ENCODE measurements at regions of chr9 and their contacts with region 1.

Region 1: DNA sequence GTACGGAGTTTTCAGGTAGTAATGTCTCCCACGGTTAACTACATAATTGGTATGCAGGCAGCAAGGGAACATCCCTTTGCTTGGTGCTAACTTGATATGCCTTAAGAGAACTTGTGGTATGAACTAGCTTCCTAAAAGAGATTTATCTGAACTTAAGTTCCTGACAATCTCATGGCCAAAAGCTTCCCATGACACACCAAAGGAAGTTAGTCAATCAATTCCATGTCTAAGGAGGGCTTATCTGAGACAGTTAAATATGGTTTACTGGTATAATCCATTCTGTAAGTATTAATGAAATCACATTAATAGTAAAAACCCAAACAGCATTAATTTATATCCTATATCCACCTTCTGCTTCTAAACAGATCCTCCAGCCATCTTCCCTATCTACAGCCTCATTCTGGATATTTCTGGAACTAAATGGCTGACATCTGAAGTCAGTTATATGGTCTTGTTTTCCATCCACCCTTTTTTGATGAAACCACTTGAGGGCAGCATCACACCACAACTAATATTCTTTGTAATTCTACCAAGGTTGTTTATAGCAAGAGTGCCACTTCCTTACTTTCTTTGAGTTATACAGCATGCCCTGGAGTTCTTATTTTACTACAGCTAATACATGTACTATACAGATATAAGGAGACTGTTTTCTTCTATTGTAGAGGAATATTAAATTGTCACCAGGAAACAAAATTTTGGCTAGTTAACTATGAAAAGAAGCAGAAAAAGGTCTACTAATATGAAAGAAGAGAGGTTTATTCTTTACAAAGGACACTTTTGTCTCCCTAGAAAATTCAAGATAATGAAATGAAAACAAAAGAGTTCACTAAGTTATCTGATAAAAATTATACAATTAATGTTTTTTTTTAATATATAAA is 34.7 kb downstream of the SHOC1 start:
- DNase-seq: peak; percentile 85
- H3K4me3 Mint-ChIP-seq: no peak overlapping the region
- H3K27ac Mint-ChIP-seq: peak overlapping the region; percentile 87
- H3K4me1 Mint-ChIP-seq: peaks cover 8% of the 10 kb centered on the region
- H3K27me3 Mint-ChIP-seq: no peaks in the 10 kb centered on the region
- CTCF ChIP-seq: peak; percentile 68

Region 2: GRCh38 chr9:112061152-112061740 is 301.2 kb after region 1 on chr9:
- CTCF ChIA-PET with region 1: interaction called, 23 read pairs
- POLR2A ChIA-PET with region 1: no interaction called
- intact Hi-C with region 1: no loop called
- DNase-seq: peak; percentile 92
- H3K4me3 Mint-ChIP-seq: no peak overlapping the region
- H3K27ac Mint-ChIP-seq: peak overlapping the region; percentile 53
- H3K4me1 Mint-ChIP-seq: peaks cover 43% of the 10 kb centered on the region
- H3K27me3 Mint-ChIP-seq: no peaks in the 10 kb centered on the region
- CTCF ChIP-seq: no peak

Region 3: DNA sequence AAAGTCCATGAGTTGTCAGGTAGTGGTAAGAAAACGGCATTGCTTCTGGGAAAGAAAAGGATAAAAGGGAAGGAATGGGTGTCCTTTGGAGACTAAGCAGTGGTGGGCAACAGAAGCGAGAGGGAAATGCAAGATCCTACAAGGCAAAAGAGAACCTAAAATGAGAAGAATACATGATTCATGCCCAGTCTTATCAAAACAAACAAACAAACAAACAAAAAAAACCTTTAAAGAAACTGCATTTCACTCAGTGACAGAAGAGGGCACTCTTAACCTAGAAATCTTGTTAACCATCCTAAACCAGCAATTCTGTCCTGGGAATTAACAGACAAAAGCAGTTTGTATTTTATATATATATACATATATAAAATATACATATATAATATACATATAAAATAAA is 326.6 kb after region 1 on chr9:
- CTCF ChIA-PET with region 1: interaction called, 12 read pairs
- POLR2A ChIA-PET with region 1: interaction called, 5 read pairs
- intact Hi-C with region 1: no loop called
- DNase-seq: peak; percentile 39
- H3K4me3 Mint-ChIP-seq: no peak overlapping the region
- H3K27ac Mint-ChIP-seq: peak overlapping the region; percentile 65
- H3K4me1 Mint-ChIP-seq: peaks cover 6% of the 10 kb centered on the region
- H3K27me3 Mint-ChIP-seq: no peaks in the 10 kb centered on the region
- CTCF ChIP-seq: peak; percentile 62

Region 4: GRCh38 chr9:112097712-112098688 is 338.0 kb after region 1 on chr9:
- CTCF ChIA-PET with region 1: interaction called, 15 read pairs
- POLR2A ChIA-PET with region 1: interaction called, 6 read pairs
- intact Hi-C with region 1: no loop called
- DNase-seq: peak; percentile 79
- H3K4me3 Mint-ChIP-seq: no peak overlapping the region
- H3K27ac Mint-ChIP-seq: no peak overlapping the region
- H3K4me1 Mint-ChIP-seq: no peaks in the 10 kb centered on the region
- H3K27me3 Mint-ChIP-seq: no peaks in the 10 kb centered on the region
- CTCF ChIP-seq: peak; percentile 75

Region 5: DNA sequence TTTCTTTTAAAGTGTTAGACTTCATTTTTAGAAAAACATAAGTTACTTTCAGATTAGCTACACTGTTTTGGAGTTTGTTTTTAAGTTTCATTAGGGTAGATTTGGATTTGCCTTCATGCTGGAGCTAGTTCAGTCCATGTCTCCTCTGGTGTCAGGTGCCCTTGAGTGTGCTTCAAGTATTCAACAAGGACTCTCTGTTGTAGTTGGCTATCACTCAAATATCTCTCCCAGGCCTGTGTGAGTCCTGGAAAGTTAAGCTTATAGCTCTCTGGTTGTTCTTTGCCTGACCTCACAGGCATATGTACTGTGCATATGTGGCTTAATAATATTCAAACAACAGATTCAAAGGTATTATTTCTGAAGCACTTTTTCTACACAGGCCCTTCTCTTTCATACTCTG is 528.0 kb after region 1 on chr9:
- CTCF ChIA-PET with region 1: no interaction called
- POLR2A ChIA-PET with region 1: no interaction called
- intact Hi-C with region 1: no loop called
- DNase-seq: no peak
- H3K4me3 Mint-ChIP-seq: no peak overlapping the region
- H3K27ac Mint-ChIP-seq: peak overlapping the region; percentile 62
- H3K4me1 Mint-ChIP-seq: peaks cover 15% of the 10 kb centered on the region
- H3K27me3 Mint-ChIP-seq: no peaks in the 10 kb centered on the region
- CTCF ChIP-seq: no peak

Measured in MCF 10A (cell line).